GM12878 (cell line): ENCODE measurements at regions of chr3 and their contacts with region 1.

Region 1: DNA sequence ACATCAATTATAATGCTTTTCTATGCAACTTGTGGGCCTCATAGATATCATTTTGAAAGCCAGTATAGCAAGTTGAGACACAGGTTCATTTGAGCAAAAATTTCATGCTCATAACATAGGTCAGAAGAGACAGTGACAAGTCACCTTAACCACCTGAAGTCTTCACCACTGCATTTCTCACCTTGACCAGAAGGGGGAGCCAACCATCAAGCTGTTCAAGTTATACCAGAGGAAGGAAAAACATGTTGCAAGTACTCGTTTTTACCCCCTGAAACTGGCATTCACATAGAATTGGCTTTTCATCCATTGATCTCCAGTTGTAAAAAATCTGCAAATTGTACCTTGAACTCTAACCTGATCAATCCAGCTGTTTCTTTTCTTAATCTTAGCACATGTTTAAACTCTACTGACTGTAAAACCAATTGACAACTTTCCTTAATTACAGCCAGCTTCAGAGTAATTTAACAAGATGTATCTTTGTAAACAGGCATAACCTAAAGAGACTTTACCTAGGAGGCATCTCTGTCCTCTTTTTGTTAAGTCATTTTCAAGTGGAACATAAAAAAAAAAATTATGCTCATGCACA is 1.4 kb downstream of the LMOD3 start:
- DNase-seq: peak; percentile 48
- ATAC-seq: peak; percentile 96
- H3K4me3 ChIP-seq: no peak overlapping the region
- H3K27ac ChIP-seq: no peak overlapping the region
- H3K4me1 ChIP-seq: no peaks in the 10 kb centered on the region
- H3K27me3 ChIP-seq: 0 out of 4 replicates have a peak, but pooled peaks cover 0 to 3% of the 10 kb centered on the region in 2 experiments
- CTCF ChIP-seq: peak; percentile 91 to 98 (median 95); a peak in 5 of 6 replicates
- EP300 ChIP-seq: no peak
- POLR2A ChIP-seq: no peak
- RAD21 ChIP-seq: peak; percentile 85

Region 2: GRCh38 chr3:68936856-68937255 is 184.1 kb before region 1 on chr3:
- CTCF ChIA-PET with region 1: no interaction called
- POLR2A ChIA-PET with region 1: no interaction called
- RAD21 ChIA-PET with region 1: no interaction called
- SMC1A ChIA-PET with region 1: no interaction called
- in situ Hi-C with region 1: no loop called
- intact Hi-C with region 1: no loop called
- DNase-seq: no peak
- ATAC-seq: no peak
- H3K4me3 ChIP-seq: no peak overlapping the region
- H3K27ac ChIP-seq: no peak overlapping the region
- H3K4me1 ChIP-seq: no peaks in the 10 kb centered on the region
- H3K27me3 ChIP-seq: peaks cover 2 to 9% of the 10 kb centered on the region in 2 experiments; a peak in 3 of 4 replicates
- CTCF ChIP-seq: no peak
- EP300 ChIP-seq: no peak
- POLR2A ChIP-seq: no peak
- RAD21 ChIP-seq: no peak

Region 3: GRCh38 chr3:69051756-69052471 is 69.1 kb before region 1 on chr3 and contains the start of gene TMF1:
- CTCF ChIA-PET with region 1: interaction called, 11 read pairs
- POLR2A ChIA-PET with region 1: interaction called, 4 read pairs
- RAD21 ChIA-PET with region 1: interaction called, 3 read pairs
- SMC1A ChIA-PET with region 1: interaction called, 3 read pairs
- in situ Hi-C with region 1: no loop called
- intact Hi-C with region 1: no loop called
- DNase-seq: peak; percentile 97
- ATAC-seq: peak; percentile 92
- H3K4me3 ChIP-seq: peak within 1 kb of the TSS; percentile 98
- H3K27ac ChIP-seq: peak within 1 kb of the TSS; percentile 73
- H3K4me1 ChIP-seq: peaks cover 3% of the 10 kb centered on the region; the same call in 1 of the 2 replicates
- H3K27me3 ChIP-seq: no peaks in the 10 kb centered on the region
- CTCF ChIP-seq: no peak
- EP300 ChIP-seq: no peak
- POLR2A ChIP-seq: peak; percentile 89
- RAD21 ChIP-seq: no peak
- polyA plus RNA-seq, gene TMF1: 7.1 to 7.9 TPM

Region 4: GRCh38 chr3:69097407-69098086 is 23.4 kb before region 1 on chr3:
- CTCF ChIA-PET with region 1: interaction called, 21 read pairs
- POLR2A ChIA-PET with region 1: interaction called, 3 read pairs
- RAD21 ChIA-PET with region 1: interaction called, 3 read pairs
- SMC1A ChIA-PET with region 1: interaction called, 11 read pairs
- in situ Hi-C with region 1: no loop called
- intact Hi-C with region 1: no loop called
- DNase-seq: no peak
- ATAC-seq: no peak
- H3K4me3 ChIP-seq: no peak overlapping the region
- H3K27ac ChIP-seq: no peak overlapping the region
- H3K4me1 ChIP-seq: peaks cover 33% of the 10 kb centered on the region
- H3K27me3 ChIP-seq: no peaks in the 10 kb centered on the region
- CTCF ChIP-seq: no peak
- EP300 ChIP-seq: no peak
- POLR2A ChIP-seq: no peak
- RAD21 ChIP-seq: no peak

Region 5: GRCh38 chr3:69324362-69325025 is 203.5 kb after region 1 on chr3:
- CTCF ChIA-PET with region 1: interaction called, 16 read pairs
- POLR2A ChIA-PET with region 1: no interaction called
- RAD21 ChIA-PET with region 1: no interaction called
- SMC1A ChIA-PET with region 1: interaction called, 6 read pairs
- in situ Hi-C with region 1: no loop called
- intact Hi-C with region 1: no loop called
- DNase-seq: no peak
- ATAC-seq: peak; percentile 70
- H3K4me3 ChIP-seq: no peak overlapping the region
- H3K27ac ChIP-seq: no peak overlapping the region
- H3K4me1 ChIP-seq: peaks cover 28% of the 10 kb centered on the region
- H3K27me3 ChIP-seq: no peaks in the 10 kb centered on the region
- CTCF ChIP-seq: peak; percentile 71 to 81 (median 77)
- EP300 ChIP-seq: 0 out of 4 replicates have a peak, but pooled peaks of 1 of the 2 experiments have one; percentile 15
- POLR2A ChIP-seq: no peak
- RAD21 ChIP-seq: peak; percentile 98

Region 6: DNA sequence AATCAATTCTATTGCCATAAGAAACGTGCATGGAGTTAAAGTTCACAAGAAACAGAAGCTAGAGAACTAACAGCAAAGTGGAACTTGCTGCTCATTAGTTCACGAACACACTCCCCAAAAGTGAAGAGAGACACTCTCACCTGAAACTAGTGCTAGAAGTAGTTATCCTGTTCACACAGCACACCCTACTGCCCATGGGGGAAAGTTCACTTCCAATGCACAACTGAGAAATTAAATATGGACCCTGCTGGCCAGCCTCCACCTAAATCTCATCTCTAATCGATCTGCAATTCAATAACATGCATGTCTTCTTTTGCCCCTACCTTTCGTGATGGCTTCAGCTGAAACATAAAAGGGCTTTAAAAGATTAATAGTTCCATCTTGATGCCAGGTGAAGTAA is 304.3 kb after region 1 on chr3:
- CTCF ChIA-PET with region 1: interaction called, 27 read pairs
- POLR2A ChIA-PET with region 1: no interaction called
- RAD21 ChIA-PET with region 1: interaction called, 8 read pairs
- SMC1A ChIA-PET with region 1: interaction called, 11 read pairs
- in situ Hi-C with region 1: no loop called
- intact Hi-C with region 1: loop called (anchors 5 kb)
- DNase-seq: no peak
- ATAC-seq: peak; percentile 92
- H3K4me3 ChIP-seq: no peak overlapping the region
- H3K27ac ChIP-seq: no peak overlapping the region
- H3K4me1 ChIP-seq: no peaks in the 10 kb centered on the region
- H3K27me3 ChIP-seq: no peaks in the 10 kb centered on the region
- CTCF ChIP-seq: peak; percentile 67 to 72 (median 68)
- EP300 ChIP-seq: no peak
- POLR2A ChIP-seq: no peak
- RAD21 ChIP-seq: peak; percentile 78

Region 7: DNA sequence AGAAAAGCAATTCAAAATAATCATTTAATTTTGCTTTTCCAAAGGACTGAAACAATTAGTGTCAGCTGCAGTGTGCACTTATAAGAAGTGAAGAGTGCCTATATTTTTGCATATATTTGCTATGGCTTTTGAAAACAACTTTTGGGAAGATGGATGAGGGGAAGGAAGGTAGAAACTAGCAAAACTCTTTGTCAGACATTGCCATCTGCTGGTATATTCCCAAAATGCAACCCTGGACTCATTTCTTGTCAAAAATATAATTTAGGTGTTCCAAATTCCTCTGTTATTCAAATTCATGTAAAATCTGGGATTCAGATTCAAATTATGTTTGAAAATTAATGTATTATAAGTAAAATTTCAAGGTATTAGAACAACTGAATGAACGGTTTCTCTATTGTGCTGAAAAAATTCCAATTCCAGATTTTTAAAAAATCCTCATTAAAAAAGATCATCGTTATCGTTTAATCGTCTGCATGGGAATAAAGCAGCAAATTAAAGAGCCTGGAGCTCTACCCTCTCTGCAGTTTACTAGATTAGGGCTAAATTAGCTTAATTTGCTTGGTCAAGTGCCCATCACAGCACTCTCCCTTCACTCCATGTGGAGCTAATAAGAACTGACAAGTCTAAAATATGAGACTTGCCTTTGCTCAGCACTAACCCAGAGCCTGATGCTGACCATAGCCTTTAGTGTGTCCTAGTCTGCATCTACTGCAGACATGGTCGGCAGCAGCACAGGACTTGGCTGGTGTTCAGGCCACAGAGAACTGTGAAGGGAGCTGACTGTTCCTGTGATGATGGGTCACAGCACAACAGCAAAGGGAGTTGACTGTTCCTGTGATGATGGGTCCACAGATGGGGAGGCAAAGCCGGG is 550.3 kb after region 1 on chr3:
- CTCF ChIA-PET with region 1: interaction called, 7 read pairs
- POLR2A ChIA-PET with region 1: no interaction called
- RAD21 ChIA-PET with region 1: interaction called, 7 read pairs
- SMC1A ChIA-PET with region 1: interaction called, 7 read pairs
- in situ Hi-C with region 1: loop called (anchors 10 kb)
- intact Hi-C with region 1: loop called (anchors 1 kb)
- DNase-seq: no peak
- ATAC-seq: peak; percentile 51; the same call in 1 of the 3 replicates
- H3K4me3 ChIP-seq: no peak overlapping the region
- H3K27ac ChIP-seq: no peak overlapping the region
- H3K4me1 ChIP-seq: no peaks in the 10 kb centered on the region
- H3K27me3 ChIP-seq: no peaks in the 10 kb centered on the region
- CTCF ChIP-seq: peak; percentile 50 to 63 (median 53); a peak in 5 of 6 replicates
- EP300 ChIP-seq: no peak
- POLR2A ChIP-seq: no peak
- RAD21 ChIP-seq: peak; percentile 69